ENCODE measurements at regions of chr1 and their contacts with region 1.

Region 1: GRCh38 chr1:39901698-39902459 is at the start of gene MYCL:
- DNase-seq: peak; percentile 34 to 72 (median 59)
- ATAC-seq: peak; percentile 87
- H3K4me3 ChIP-seq: peak within 1 kb of the TSS; percentile 66
- H3K4me3 Mint-ChIP-seq: peak within 1 kb of the TSS; percentile 68 to 82 (median 78)
- H3K27ac ChIP-seq: no peak within 1 kb of the TSS
- H3K27ac Mint-ChIP-seq: no peak within 1 kb of the TSS
- H3K4me1 ChIP-seq: peaks cover 0 to 8% of the 10 kb centered on the region in 2 donors
- H3K4me1 Mint-ChIP-seq: peaks cover 0 to 10% (median 7%) of the 10 kb centered on the region in 7 donors
- H3K27me3 ChIP-seq: peaks cover 0 to 5% of the 10 kb centered on the region in 2 donors
- H3K27me3 Mint-ChIP-seq: peaks cover 49 to 71% (median 52%) of the 10 kb centered on the region in 5 donors
- total RNA-seq, gene MYCL: 0.30 to 8.1 (median 0.83) TPM in 4 of 5 experiments, not detected in the other

Region 2: DNA sequence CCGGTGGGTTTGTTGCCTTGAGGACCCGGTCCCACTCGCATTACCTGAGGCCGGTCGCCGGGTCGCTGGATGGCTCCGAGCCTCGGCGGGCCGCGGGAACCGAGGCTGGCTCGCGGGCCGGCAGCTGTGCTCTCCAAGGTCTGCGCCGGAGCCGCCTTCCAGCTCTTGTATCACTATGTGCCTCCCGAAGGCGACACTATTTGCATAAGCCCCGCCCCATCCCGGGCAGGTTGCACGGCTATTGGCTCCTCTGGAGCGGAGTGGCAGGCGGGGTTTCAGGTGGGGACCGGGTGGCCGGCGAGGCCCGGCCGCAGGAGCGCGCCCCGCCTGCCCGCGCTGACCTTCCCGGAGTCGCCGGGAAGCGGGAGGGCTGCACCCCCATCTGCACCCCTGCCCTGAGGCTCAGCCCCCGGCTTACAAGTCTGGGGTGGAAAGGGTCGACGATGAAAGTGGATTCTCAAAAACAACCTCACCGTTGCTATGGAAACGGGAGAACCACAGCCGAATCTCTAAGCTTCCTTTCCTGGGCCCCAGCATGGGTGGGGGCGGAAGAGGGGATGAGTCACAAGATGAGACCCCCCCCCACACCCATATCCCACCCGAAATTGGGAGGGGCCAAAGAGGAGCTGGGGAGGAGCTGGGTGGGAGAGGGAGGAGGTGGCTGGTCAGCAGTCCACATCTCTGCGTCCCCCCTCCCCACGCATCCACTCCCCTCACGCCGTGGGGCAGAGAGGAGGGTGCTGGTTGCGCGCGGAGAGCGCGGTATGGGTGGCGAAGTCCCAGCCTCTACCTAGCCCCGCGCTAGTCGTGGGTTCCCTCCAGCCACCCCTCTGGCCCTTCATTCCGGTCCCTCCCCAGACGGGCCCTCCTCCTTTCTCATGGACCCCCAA is 210.4 kb before region 1 on chr1 and contains the start of gene HPCAL4:
- CTCF ChIA-PET with region 1: no interaction called
- POLR2A ChIA-PET with region 1: no interaction called
- intact Hi-C with region 1: loop called in 1 of 2 experiments (anchors 5 kb)
- DNase-seq: peak; percentile 79 to 93 (median 88)
- ATAC-seq: peak; percentile 93
- H3K4me3 ChIP-seq: peak within 1 kb of the TSS; percentile 89
- H3K4me3 Mint-ChIP-seq: peak within 1 kb of the TSS; percentile 71 to 90 (median 86)
- H3K27ac ChIP-seq: peak within 1 kb of the TSS; percentile 69
- H3K27ac Mint-ChIP-seq: peak within 1 kb of the TSS; percentile 60 to 93 (median 84)
- H3K4me1 ChIP-seq: peaks cover 21 to 36% of the 10 kb centered on the region in 2 donors
- H3K4me1 Mint-ChIP-seq: peaks cover 22 to 48% (median 28%) of the 10 kb centered on the region in 7 donors
- H3K27me3 ChIP-seq: no peaks in the 10 kb centered on the region
- H3K27me3 Mint-ChIP-seq: peaks cover 0 to 63% (median 13%) of the 10 kb centered on the region in 5 donors
- total RNA-seq, gene HPCAL4: 2.9 to 49.0 (median 18.7) TPM

Region 3: GRCh38 chr1:39845275-39846116 is 56.4 kb before region 1 on chr1:
- CTCF ChIA-PET with region 1: interaction called, 4 read pairs
- POLR2A ChIA-PET with region 1: no interaction called
- intact Hi-C with region 1: loop called in 1 of 2 experiments (anchors 2 kb)
- DNase-seq: peak; percentile 51 to 93 (median 82)
- ATAC-seq: peak; percentile 98
- H3K4me3 ChIP-seq: no peak overlapping the region
- H3K4me3 Mint-ChIP-seq: peak overlapping the region; percentile 27 to 86 (median 64)
- H3K27ac ChIP-seq: peak overlapping the region; percentile 77
- H3K27ac Mint-ChIP-seq: peak overlapping the region; percentile 80 to 97 (median 94)
- H3K4me1 ChIP-seq: peaks cover 43 to 58% of the 10 kb centered on the region in 2 donors
- H3K4me1 Mint-ChIP-seq: peaks cover 37 to 64% (median 53%) of the 10 kb centered on the region in 7 donors
- H3K27me3 ChIP-seq: no peaks in the 10 kb centered on the region
- H3K27me3 Mint-ChIP-seq: no peaks in the 10 kb centered on the region

Region 4: DNA sequence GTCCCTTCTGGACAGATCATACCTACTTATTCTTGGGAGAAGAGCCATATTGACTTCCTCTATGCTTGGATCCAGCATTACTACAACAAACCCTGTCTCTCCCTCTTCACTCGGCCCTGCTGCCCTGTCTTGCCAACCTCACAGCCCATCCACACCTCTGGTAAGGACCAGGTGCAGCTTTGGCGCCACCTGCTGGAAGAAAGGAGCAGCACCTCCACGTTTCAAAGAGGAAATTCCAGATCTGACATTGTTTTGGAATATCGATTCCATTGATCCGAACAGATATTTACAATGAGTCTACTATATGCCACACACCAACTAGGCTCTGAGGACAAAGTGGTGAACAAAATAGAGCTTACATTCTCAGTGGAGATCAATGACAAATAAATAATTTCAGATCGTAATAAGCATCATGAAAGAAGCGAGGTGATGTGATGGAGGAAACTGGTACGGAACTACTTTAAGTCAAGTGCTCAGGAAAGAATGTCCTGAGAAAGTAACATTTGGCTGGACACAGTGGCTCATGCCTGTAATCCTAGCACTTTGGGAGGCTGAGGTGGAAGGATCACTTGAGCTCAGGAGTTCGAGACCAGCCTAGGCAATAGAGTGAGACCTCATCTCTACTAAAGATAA is 71.7 kb after region 1 on chr1:
- CTCF ChIA-PET with region 1: interaction called, 8 read pairs
- POLR2A ChIA-PET with region 1: no interaction called
- intact Hi-C with region 1: loop called in 1 of 2 experiments (anchors 1 kb)
- DNase-seq: peak; percentile 49 to 73 (median 63)
- ATAC-seq: peak; percentile 85
- H3K4me3 ChIP-seq: no peak overlapping the region
- H3K4me3 Mint-ChIP-seq: peak overlapping the region in 1 of 10 donors; percentile 9
- H3K27ac ChIP-seq: no peak overlapping the region
- H3K27ac Mint-ChIP-seq: no peak overlapping the region
- H3K4me1 ChIP-seq: no peaks in the 10 kb centered on the region
- H3K4me1 Mint-ChIP-seq: peaks cover 4 to 6% (median 5%) of the 10 kb centered on the region in 7 donors
- H3K27me3 ChIP-seq: no peaks in the 10 kb centered on the region
- H3K27me3 Mint-ChIP-seq: peaks cover 0 to 3% (median 0%) of the 10 kb centered on the region in 5 donors

Measured in naive thymus-derived CD4-positive, alpha-beta T cell (primary cell).